ENCODE measurements at regions of chr6 and their contacts with region 1.

Region 1: DNA sequence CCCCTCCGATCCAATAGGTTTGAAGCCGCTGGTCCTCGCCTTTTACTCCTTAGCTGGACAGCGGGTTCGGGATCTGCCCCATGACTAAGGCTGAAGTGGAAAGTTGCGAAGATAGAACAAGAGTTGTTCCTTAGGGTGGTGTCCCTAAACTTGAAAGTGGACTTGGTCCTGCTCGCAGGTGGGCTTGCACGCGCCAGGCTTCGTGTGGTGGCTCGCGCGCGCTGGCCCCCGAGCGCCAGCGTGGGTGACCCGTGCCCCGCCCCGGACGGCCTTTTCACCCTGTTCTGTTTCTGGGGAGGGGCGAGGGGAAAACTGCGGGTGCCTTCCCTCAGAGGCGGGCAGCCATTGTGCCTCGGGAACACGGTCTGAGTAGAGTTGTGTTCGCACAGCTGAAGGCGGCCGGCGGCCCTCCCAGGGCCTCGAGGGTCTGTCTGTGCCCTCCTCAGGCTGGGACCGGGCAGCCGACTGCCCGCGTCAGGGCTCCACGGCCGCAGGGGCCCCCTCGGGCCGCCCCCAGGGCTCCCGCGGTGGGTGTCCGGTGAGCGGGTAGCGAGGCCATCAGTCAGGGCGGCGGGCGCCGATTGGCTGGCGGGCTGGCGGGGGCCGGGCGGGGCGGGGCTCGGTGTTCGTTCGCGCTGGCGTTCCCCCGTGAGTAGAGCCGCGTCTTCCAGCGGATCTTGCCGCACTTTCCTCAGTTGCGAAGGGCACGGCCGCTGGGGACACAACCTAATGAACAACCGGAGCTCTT is 33.0 kb downstream of the RREB1 start:
- DNase-seq: peak; percentile 56 to 84 (median 79)
- ATAC-seq: peak; percentile 82
- H3K4me3 ChIP-seq: peak overlapping the region; percentile 58 to 73
- H3K4me3 Mint-ChIP-seq: peak overlapping the region; percentile 89
- H3K27ac ChIP-seq: peak overlapping the region; percentile 51 to 64
- H3K27ac Mint-ChIP-seq: peak overlapping the region; percentile 91
- H3K4me1 ChIP-seq: peaks cover 62% of the 10 kb centered on the region
- H3K4me1 Mint-ChIP-seq: peaks cover 70% of the 10 kb centered on the region
- H3K27me3 ChIP-seq: no peaks in the 10 kb centered on the region
- H3K27me3 Mint-ChIP-seq: no peaks in the 10 kb centered on the region
- CTCF ChIP-seq: no peak

Region 2: GRCh38 chr6:7051233-7052114 is 89.3 kb before region 1 on chr6:
- CTCF ChIA-PET with region 1: no interaction called
- POLR2A ChIA-PET with region 1: interaction called, 3 read pairs
- intact Hi-C with region 1: loop called (anchors 2 to 5 kb)
- DNase-seq: peak; percentile 13 to 77 (median 59)
- ATAC-seq: peak; percentile 79
- H3K4me3 ChIP-seq: peak overlapping the region; percentile 59 to 79
- H3K4me3 Mint-ChIP-seq: peak overlapping the region; percentile 81
- H3K27ac ChIP-seq: peak overlapping the region in 1 of 2 experiments; percentile 50
- H3K27ac Mint-ChIP-seq: peak overlapping the region; percentile 82
- H3K4me1 ChIP-seq: peaks cover 5% of the 10 kb centered on the region
- H3K4me1 Mint-ChIP-seq: peaks cover 15% of the 10 kb centered on the region
- H3K27me3 ChIP-seq: no peaks in the 10 kb centered on the region
- H3K27me3 Mint-ChIP-seq: no peaks in the 10 kb centered on the region
- CTCF ChIP-seq: no peak

Region 3: GRCh38 chr6:7062451-7063162 is 78.2 kb before region 1 on chr6:
- CTCF ChIA-PET with region 1: no interaction called
- POLR2A ChIA-PET with region 1: no interaction called
- intact Hi-C with region 1: no loop called
- DNase-seq: no peak
- ATAC-seq: no peak
- H3K4me3 ChIP-seq: no peak overlapping the region
- H3K4me3 Mint-ChIP-seq: no peak overlapping the region
- H3K27ac ChIP-seq: no peak overlapping the region
- H3K27ac Mint-ChIP-seq: no peak overlapping the region
- H3K4me1 ChIP-seq: no peaks in the 10 kb centered on the region
- H3K4me1 Mint-ChIP-seq: peaks cover 2% of the 10 kb centered on the region
- H3K27me3 ChIP-seq: no peaks in the 10 kb centered on the region
- H3K27me3 Mint-ChIP-seq: no peaks in the 10 kb centered on the region
- CTCF ChIP-seq: no peak

Region 4: GRCh38 chr6:7112741-7113313 is 28.0 kb before region 1 on chr6:
- CTCF ChIA-PET with region 1: interaction called, 7 read pairs
- POLR2A ChIA-PET with region 1: interaction called, 4 read pairs
- intact Hi-C with region 1: loop called (anchors 1 kb)
- DNase-seq: peak; percentile 6 to 84 (median 56)
- ATAC-seq: peak; percentile 64
- H3K4me3 ChIP-seq: peak overlapping the region in 1 of 2 experiments; percentile 16
- H3K4me3 Mint-ChIP-seq: peak overlapping the region; percentile 82
- H3K27ac ChIP-seq: no peak overlapping the region
- H3K27ac Mint-ChIP-seq: peak overlapping the region; percentile 93
- H3K4me1 ChIP-seq: peaks cover 62% of the 10 kb centered on the region
- H3K4me1 Mint-ChIP-seq: peaks cover 77% of the 10 kb centered on the region
- H3K27me3 ChIP-seq: no peaks in the 10 kb centered on the region
- H3K27me3 Mint-ChIP-seq: no peaks in the 10 kb centered on the region
- CTCF ChIP-seq: no peak

Region 5: DNA sequence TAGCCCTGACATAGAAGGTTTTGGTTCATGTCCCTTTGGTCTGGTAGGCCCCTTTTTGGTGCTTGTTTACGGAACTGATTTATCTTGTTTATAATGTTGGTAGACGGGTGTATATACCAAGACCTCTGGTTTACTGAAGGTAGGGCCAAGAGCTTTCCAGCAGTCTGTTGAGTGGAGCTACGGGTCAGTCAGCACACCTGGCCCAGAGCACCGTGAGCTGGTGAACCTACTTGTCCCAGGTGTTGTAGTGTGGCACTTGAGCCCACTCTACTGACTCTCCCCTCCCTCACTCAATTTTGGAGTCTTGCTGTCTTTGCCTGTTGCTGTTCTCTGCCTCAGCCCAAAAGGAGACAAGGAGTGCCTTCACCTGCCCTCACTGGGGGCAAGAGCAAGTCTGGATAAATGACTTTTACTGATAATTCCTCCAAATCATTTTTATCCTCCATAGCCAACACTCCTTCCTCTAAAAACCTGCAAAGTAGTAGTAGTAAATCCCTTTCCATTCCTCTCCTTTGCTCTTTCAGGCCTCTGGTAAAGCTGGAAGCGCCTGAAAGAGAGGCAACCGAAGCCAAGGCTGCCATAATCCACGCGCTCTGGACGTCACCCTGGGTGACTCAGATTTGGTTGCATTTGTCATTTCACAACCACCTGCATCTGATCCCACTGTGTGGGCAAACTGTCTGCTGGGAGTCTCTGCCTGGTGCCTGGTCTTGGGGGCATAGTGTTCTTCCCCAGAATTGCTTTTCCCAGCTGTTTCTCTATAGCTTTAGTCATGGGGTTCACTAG is 10.8 kb before region 1 on chr6:
- CTCF ChIA-PET with region 1: interaction called, 6 read pairs
- POLR2A ChIA-PET with region 1: interaction called, 11 read pairs
- intact Hi-C with region 1: loop called in 1 of 2 experiments (anchors 1 kb)
- DNase-seq: peak in 1 of 9 experiments; percentile 35
- ATAC-seq: no peak
- H3K4me3 ChIP-seq: no peak overlapping the region
- H3K4me3 Mint-ChIP-seq: no peak overlapping the region
- H3K27ac ChIP-seq: no peak overlapping the region
- H3K27ac Mint-ChIP-seq: peak overlapping the region; percentile 74
- H3K4me1 ChIP-seq: peaks cover 48% of the 10 kb centered on the region
- H3K4me1 Mint-ChIP-seq: peaks cover 82% of the 10 kb centered on the region
- H3K27me3 ChIP-seq: no peaks in the 10 kb centered on the region
- H3K27me3 Mint-ChIP-seq: no peaks in the 10 kb centered on the region
- CTCF ChIP-seq: no peak

Region 6: DNA sequence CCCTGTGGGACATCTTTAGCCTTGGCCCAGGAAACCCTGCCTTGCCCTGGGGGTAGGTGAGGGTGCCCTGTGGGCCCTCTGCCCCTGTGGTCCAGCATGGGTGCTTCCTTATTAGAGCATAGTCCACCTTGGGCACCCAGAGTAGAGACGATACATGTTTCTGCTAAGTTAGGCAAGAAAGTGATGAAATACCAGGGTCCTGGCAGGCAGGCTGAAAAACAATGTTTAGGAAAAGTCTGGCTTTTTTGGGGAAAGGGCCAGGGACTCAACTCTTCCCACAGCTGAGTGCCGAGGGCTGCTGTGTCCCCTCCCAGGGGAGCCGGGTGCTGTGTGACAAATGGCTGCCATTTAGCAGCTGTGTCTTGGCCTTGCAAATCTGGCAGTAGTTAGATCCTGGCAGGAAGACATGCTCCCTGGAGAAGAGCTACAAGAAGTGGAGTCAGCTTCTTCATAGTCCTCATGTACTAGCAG is 28.5 kb after region 1 on chr6:
- CTCF ChIA-PET with region 1: no interaction called
- POLR2A ChIA-PET with region 1: no interaction called
- intact Hi-C with region 1: no loop called
- DNase-seq: no peak
- ATAC-seq: no peak
- H3K4me3 ChIP-seq: no peak overlapping the region
- H3K4me3 Mint-ChIP-seq: no peak overlapping the region
- H3K27ac ChIP-seq: no peak overlapping the region
- H3K27ac Mint-ChIP-seq: no peak overlapping the region
- H3K4me1 ChIP-seq: peaks cover 19% of the 10 kb centered on the region
- H3K4me1 Mint-ChIP-seq: peaks cover 57% of the 10 kb centered on the region
- H3K27me3 ChIP-seq: no peaks in the 10 kb centered on the region
- H3K27me3 Mint-ChIP-seq: no peaks in the 10 kb centered on the region
- CTCF ChIP-seq: no peak

Region 7: DNA sequence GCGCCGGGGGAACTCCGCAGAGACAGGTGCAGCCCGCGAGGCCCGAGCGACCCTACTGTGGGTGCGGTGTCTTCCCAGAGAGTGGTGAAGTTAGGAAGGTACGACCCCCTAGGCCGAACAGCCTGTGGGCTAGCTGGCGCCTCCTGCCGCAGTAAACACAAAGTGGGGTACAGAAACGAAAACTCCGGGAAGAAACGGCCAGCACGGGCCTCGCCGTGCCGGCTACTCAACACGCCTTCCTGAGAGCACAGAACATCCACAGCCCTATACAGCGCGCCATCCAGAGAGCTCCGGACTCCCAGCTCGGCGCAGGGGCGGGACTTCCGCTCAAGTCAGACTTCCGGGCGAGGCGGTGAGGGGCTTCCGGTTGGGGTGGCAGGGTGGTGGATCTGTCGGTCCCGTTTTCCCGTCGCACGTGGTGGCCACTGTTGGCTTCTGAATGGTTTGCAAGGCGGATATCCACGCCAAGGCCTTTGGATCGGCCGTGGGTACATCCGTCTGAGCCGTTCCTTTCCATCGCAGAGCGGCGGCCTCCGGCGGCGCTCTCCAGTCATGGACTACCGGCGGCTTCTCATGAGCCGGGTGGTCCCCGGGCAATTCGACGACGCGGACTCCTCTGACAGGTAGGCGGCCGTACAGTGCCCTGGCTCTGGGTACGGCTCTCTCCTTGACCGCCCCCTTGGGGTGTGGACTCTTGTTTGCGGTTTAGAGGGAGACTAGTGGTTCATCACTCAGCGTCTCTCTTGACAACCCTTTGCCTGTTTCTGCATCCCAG is 248.8 kb after region 1 on chr6 and contains the starts of genes CAGE1 and RIOK1:
- CTCF ChIA-PET with region 1: no interaction called
- POLR2A ChIA-PET with region 1: no interaction called
- intact Hi-C with region 1: loop called in 1 of 2 experiments (anchors 10 kb)
- DNase-seq: peak; percentile 85 to 97 (median 95)
- ATAC-seq: peak; percentile 89
- H3K4me3 ChIP-seq: peak within 1 kb of the TSS; percentile 77 to 91
- H3K4me3 Mint-ChIP-seq: peak within 1 kb of the TSS; percentile 98
- H3K27ac ChIP-seq: peak within 1 kb of the TSS; percentile 90 to 97
- H3K27ac Mint-ChIP-seq: peak within 1 kb of the TSS; percentile 100
- H3K4me1 ChIP-seq: peaks cover 29% of the 10 kb centered on the region
- H3K4me1 Mint-ChIP-seq: peaks cover 49% of the 10 kb centered on the region
- H3K27me3 ChIP-seq: no peaks in the 10 kb centered on the region
- H3K27me3 Mint-ChIP-seq: no peaks in the 10 kb centered on the region
- CTCF ChIP-seq: no peak
- total RNA-seq, gene CAGE1: 0.33 to 0.49 TPM
- total RNA-seq, gene RIOK1: 47.3 to 56.3 TPM

Measured in CD8-positive, alpha-beta T cell (primary cell).